ENCODE measurements at regions of chr4 and their contacts with region 1.

Region 1: GRCh38 chr4:81260443-81261101 is 45.5 kb upstream of the PRKG2 start:
- DNase-seq: no peak
- ATAC-seq: no peak
- H3K4me3 ChIP-seq: no peak overlapping the region
- H3K27ac ChIP-seq: no peak overlapping the region
- H3K4me1 ChIP-seq: peaks cover 5% of the 10 kb centered on the region
- H3K27me3 ChIP-seq: no peaks in the 10 kb centered on the region
- CTCF ChIP-seq: peak; percentile 33; the same call in 1 of the 2 replicates
- POLR2A ChIP-seq: no peak
- RAD21 ChIP-seq: no peak

Region 2: GRCh38 chr4:81225252-81225651 is 35.3 kb before region 1 on chr4:
- CTCF ChIA-PET with region 1: no interaction called
- POLR2A ChIA-PET with region 1: no interaction called
- dilution Hi-C with region 1: no loop called
- in situ Hi-C with region 1: no loop called
- intact Hi-C with region 1: no loop called
- DNase-seq: no peak
- ATAC-seq: no peak
- H3K4me3 ChIP-seq: no peak overlapping the region
- H3K27ac ChIP-seq: no peak overlapping the region
- H3K4me1 ChIP-seq: peaks cover 2% of the 10 kb centered on the region; the same call in 1 of the 2 replicates
- H3K27me3 ChIP-seq: no peaks in the 10 kb centered on the region
- CTCF ChIP-seq: no peak
- POLR2A ChIP-seq: no peak
- RAD21 ChIP-seq: no peak

Region 3: DNA sequence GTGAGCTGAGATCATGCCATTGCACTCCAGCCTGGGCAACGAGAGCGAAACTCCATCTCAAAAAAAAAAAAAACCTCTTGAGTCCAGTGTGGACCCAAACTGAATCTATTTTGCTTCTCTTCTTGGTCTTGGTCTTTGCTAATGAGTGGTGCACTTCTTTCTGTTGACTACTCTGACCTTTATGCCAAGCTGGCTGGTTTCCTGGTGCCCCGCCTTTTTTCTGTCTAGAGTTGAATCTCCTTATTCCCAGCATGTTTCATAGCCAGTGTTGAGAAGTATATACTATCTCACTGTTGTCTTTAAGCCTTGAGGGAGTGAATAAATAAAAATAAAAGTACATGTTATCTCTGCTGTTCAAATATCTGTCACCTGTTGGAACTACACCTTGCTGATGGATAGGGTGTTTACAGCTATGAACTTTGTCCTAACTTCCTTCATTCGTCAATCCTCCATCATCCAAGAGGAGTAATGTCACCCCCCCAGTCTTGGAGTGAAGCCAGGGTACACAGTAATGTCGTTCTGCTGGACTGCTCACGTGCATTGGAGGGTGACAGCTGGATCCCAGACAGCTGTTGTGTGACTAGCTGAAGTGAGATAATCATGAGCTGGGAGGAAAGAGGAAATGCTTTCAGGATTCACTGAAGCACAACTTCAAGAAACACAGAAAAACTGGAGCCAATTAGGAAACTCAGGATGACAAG is 53.8 kb after region 1 on chr4:
- CTCF ChIA-PET with region 1: interaction called, 4 read pairs
- POLR2A ChIA-PET with region 1: no interaction called
- dilution Hi-C with region 1: no loop called
- in situ Hi-C with region 1: no loop called
- intact Hi-C with region 1: loop called (anchors 5 kb)
- DNase-seq: peak; percentile 91
- ATAC-seq: peak; percentile 74
- H3K4me3 ChIP-seq: no peak overlapping the region
- H3K27ac ChIP-seq: peak overlapping the region; percentile 76
- H3K4me1 ChIP-seq: peaks cover 4% of the 10 kb centered on the region; the same call in 1 of the 2 replicates
- H3K27me3 ChIP-seq: no peaks in the 10 kb centered on the region
- CTCF ChIP-seq: no peak
- POLR2A ChIP-seq: no peak
- RAD21 ChIP-seq: no peak

Measured in IMR-90 (cell line).